ENCODE measurements at regions of chr6 and their contacts with region 1.

Region 1: GRCh38 chr6:46419576-46420002 is 71.7 kb downstream of the RCAN2 start:
- DNase-seq: peak; percentile 83
- ATAC-seq: 0 out of 2 replicates have a peak, but pooled peaks have one; percentile 43
- H3K4me3 ChIP-seq: no peak overlapping the region
- H3K27ac ChIP-seq: no peak overlapping the region
- H3K4me1 ChIP-seq: peaks cover 8% of the 10 kb centered on the region
- H3K27me3 ChIP-seq: peaks cover 6% of the 10 kb centered on the region; the same call in 1 of the 2 replicates
- CTCF ChIP-seq: peak; percentile 76

Region 2: DNA sequence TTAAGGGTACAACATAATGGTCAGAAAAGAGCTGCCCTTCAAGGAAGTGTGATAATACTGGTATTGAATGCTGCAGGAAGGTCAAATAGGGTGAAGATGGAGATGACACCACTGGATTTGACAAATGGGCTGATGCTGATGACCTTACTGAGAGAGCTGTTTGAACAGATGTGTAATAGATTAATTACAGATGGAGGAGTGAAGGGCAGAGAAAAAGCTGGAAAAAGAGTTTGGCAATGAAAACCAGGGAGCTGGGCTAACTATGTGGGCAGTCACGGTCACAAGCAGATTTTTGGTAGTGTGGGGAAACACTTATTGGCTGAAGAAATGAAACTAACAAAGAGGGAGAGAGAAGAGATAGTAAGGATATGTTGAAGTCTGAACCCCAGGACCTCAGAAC is 165.3 kb before region 1 on chr6:
- CTCF ChIA-PET with region 1: no interaction called
- POLR2A ChIA-PET with region 1: no interaction called
- intact Hi-C with region 1: no loop called
- DNase-seq: no peak
- ATAC-seq: no peak
- H3K4me3 ChIP-seq: no peak overlapping the region
- H3K27ac ChIP-seq: no peak overlapping the region
- H3K4me1 ChIP-seq: no peaks in the 10 kb centered on the region
- H3K27me3 ChIP-seq: peaks cover 64% of the 10 kb centered on the region
- CTCF ChIP-seq: no peak

Region 3: GRCh38 chr6:46626228-46626909 is 206.8 kb after region 1 on chr6:
- CTCF ChIA-PET with region 1: no interaction called
- POLR2A ChIA-PET with region 1: no interaction called
- intact Hi-C with region 1: loop called (anchors 1 kb)
- DNase-seq: peak; percentile 73
- ATAC-seq: peak; percentile 67
- H3K4me3 ChIP-seq: no peak overlapping the region
- H3K27ac ChIP-seq: no peak overlapping the region
- H3K4me1 ChIP-seq: no peaks in the 10 kb centered on the region
- H3K27me3 ChIP-seq: no peaks in the 10 kb centered on the region
- CTCF ChIP-seq: peak; percentile 83

Region 4: DNA sequence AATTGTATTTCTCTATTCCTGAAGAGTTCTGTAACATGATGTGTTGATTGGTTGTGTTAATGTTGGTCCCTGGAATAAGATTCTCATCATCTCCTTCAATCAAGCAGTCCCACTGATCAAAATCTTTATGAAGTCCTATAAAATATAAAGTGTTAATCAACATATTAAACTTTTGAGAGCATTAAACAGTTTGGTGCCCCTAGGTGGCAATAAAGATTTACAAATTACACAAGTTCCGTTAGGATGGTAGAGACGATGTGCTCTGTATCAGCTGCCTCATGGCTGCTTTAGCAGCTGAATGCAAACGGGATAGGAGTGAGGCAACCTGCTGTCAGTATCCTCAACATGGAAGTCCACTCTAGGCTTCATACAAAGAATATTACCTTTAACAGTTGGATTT is 285.0 kb after region 1 on chr6:
- CTCF ChIA-PET with region 1: no interaction called
- POLR2A ChIA-PET with region 1: no interaction called
- intact Hi-C with region 1: loop called (anchors 5 kb)
- DNase-seq: peak; percentile 80
- ATAC-seq: peak; percentile 90
- H3K4me3 ChIP-seq: no peak overlapping the region
- H3K27ac ChIP-seq: no peak overlapping the region
- H3K4me1 ChIP-seq: peaks cover 10% of the 10 kb centered on the region
- H3K27me3 ChIP-seq: no peaks in the 10 kb centered on the region
- CTCF ChIP-seq: peak; percentile 76

Region 5: DNA sequence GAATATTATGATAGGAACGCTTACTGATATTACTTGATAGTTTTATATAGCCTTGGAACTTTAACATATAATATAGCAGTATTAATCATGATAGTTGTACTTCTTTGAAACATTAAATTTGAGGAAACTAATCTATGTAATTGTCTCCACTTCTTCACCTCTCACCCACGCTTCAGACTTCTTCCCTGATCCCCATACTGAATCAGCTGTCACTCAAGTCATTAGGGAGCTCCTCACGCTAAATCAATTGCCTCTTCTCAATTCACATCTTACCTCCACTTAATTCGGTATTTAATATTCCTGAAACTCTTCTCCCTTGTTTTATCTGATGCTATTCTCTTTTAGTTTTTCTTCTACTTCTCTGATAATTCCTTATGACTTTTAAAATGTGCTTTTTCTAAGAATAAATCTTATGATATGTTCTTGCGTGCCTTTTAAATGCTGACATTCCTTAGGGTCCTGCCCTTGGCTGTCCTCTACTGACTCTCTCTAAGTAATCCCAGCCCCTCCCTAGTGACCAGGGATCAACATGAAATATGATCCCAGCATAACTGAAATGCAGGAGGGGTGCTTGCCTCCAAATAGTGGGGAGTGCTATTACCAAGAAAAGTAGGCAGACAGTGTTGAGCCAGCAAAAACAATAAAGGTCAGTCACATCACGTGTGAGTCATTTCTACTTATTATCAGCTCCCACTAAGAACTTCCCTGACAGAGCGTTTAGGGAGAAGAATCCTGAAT is 337.0 kb after region 1 on chr6:
- CTCF ChIA-PET with region 1: no interaction called
- POLR2A ChIA-PET with region 1: no interaction called
- intact Hi-C with region 1: no loop called
- DNase-seq: peak; percentile 12
- ATAC-seq: peak; percentile 35; the same call in 1 of the 2 replicates
- H3K4me3 ChIP-seq: no peak overlapping the region
- H3K27ac ChIP-seq: no peak overlapping the region
- H3K4me1 ChIP-seq: peaks cover 8% of the 10 kb centered on the region
- H3K27me3 ChIP-seq: no peaks in the 10 kb centered on the region
- CTCF ChIP-seq: no peak

Measured in PC-3 (cell line).